PC-9 (cell line): ENCODE measurements at regions of chr1 and their contacts with region 1.

Region 1: DNA sequence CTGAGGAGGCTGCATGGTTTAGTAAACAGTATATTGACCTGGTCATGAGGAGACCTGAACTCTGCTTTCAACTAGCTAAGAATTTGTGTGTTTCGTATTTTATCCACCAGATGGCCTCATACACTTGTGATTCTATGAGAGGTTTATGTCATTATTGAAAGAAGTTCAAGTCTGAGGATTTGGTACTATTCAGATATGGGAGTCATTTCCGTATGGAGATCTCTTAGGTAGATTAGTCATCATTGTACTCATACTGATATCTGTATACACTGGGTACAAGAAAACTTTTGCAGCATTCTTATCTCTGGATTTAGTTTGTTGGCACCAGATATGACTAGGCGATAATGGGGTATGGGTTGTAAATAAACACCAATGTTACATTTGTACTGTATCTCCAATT is 26.6 kb downstream of the ATF6 start:
- DNase-seq: peak; percentile 5 to 84
- H3K4me3 ChIP-seq: no peak overlapping the region
- H3K27ac ChIP-seq: no peak overlapping the region
- H3K4me1 ChIP-seq: no peaks in the 10 kb centered on the region; the same call in 1 of the 2 replicates
- H3K27me3 ChIP-seq: no peaks in the 10 kb centered on the region
- CTCF ChIP-seq: peak; percentile 76

Region 2: GRCh38 chr1:162023547-162024501 is 231.1 kb after region 1 on chr1 and contains the start of gene OLFML2B:
- CTCF ChIA-PET with region 1: interaction called, 6 read pairs
- POLR2A ChIA-PET with region 1: interaction called, 3 read pairs
- intact Hi-C with region 1: loop called (anchors 5 kb)
- DNase-seq: peak; percentile 61 to 65
- H3K4me3 ChIP-seq: peak within 1 kb of the TSS; percentile 67
- H3K27ac ChIP-seq: no peak within 1 kb of the TSS
- H3K4me1 ChIP-seq: peaks cover 6% of the 10 kb centered on the region
- H3K27me3 ChIP-seq: peaks cover 10% of the 10 kb centered on the region; the same call in 1 of the 2 replicates
- CTCF ChIP-seq: peak; percentile 44; the same call in 1 of the 2 replicates
- total RNA-seq, gene OLFML2B: 0.50 TPM in 1 of 2 replicates, not detected in the other

Region 3: DNA sequence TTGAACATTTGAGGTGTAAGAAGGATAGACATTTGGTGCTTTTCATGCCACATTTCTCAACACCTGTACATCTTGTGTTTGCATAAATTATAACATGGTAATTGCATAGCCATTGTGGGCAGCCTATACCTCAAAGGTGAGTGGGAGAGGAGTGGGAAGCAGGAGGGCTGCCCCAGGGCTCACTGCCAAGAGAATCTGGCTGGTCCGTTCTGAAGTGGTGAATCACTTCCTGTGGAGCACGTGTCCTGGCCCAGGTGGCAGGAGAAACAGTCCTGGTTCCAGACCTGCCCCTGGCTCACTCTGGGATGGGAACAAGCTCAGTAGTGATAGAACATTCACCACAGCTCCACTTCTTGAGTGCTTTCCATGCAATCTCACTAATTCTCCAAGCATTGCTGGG is 242.5 kb after region 1 on chr1:
- CTCF ChIA-PET with region 1: interaction called, 99 read pairs
- POLR2A ChIA-PET with region 1: interaction called, 4 read pairs
- intact Hi-C with region 1: loop called (anchors 1 kb)
- DNase-seq: peak in 1 of 2 experiments; percentile 27
- H3K4me3 ChIP-seq: no peak overlapping the region
- H3K27ac ChIP-seq: no peak overlapping the region
- H3K4me1 ChIP-seq: 0 out of 2 replicates have a peak, but pooled peaks cover 6% of the 10 kb centered on the region
- H3K27me3 ChIP-seq: no peaks in the 10 kb centered on the region
- CTCF ChIP-seq: no peak

Region 4: GRCh38 chr1:162040681-162041080 is 247.9 kb after region 1 on chr1:
- CTCF ChIA-PET with region 1: interaction called, 99 read pairs
- POLR2A ChIA-PET with region 1: interaction called, 4 read pairs
- intact Hi-C with region 1: loop called (anchors 1 kb)
- DNase-seq: peak in 1 of 2 experiments; percentile 39
- H3K4me3 ChIP-seq: no peak overlapping the region
- H3K27ac ChIP-seq: no peak overlapping the region
- H3K4me1 ChIP-seq: 0 out of 2 replicates have a peak, but pooled peaks cover 1% of the 10 kb centered on the region
- H3K27me3 ChIP-seq: no peaks in the 10 kb centered on the region
- CTCF ChIP-seq: peak; percentile 58; the same call in 1 of the 2 replicates

Region 5: GRCh38 chr1:162276493-162276892 is 483.8 kb after region 1 on chr1:
- CTCF ChIA-PET with region 1: no interaction called
- POLR2A ChIA-PET with region 1: no interaction called
- intact Hi-C with region 1: loop called (anchors 5 kb)
- DNase-seq: no peak
- H3K4me3 ChIP-seq: no peak overlapping the region
- H3K27ac ChIP-seq: no peak overlapping the region
- H3K4me1 ChIP-seq: no peaks in the 10 kb centered on the region
- H3K27me3 ChIP-seq: no peaks in the 10 kb centered on the region
- CTCF ChIP-seq: peak; percentile 71

Region 6: DNA sequence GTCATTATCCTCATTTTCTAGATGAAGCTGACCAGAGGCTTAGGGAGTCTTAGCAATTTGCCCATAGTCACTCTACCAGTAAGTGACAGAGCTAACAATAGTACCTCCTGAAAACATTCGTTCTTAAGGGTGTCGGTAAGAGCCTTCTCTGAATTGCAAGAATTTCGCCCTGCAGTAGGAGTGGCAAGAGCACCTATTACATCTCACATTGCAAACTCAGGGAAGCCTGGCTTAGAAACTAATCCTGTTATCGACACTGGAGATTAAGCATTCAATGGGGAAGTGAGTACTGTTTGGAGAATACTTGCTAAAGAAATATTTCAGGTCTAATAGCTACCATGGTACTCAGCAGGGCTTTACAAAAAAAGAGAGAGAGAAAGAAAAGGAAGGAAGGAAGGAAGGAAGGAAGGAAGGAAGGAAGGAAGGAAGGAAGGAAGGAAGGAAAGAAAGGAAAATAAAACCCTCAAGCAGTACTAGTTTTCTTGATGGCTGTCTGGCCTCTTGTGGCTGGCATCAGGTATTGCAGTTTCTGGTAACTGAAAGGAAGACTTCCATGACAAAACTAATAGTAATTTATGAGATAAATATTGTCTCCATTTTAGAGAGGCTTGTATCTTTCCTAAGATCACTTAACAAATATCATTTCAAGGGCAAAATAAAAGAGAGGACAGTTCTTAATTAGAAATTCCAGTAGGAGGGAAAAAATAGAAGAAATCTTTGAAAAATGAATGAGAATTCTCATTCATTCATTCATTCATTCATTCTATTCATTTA is 599.2 kb after region 1 on chr1:
- CTCF ChIA-PET with region 1: no interaction called
- POLR2A ChIA-PET with region 1: no interaction called
- intact Hi-C with region 1: loop called (anchors 5 kb)
- DNase-seq: peak in 1 of 2 experiments; percentile 21
- H3K4me3 ChIP-seq: no peak overlapping the region
- H3K27ac ChIP-seq: no peak overlapping the region
- H3K4me1 ChIP-seq: no peaks in the 10 kb centered on the region
- H3K27me3 ChIP-seq: no peaks in the 10 kb centered on the region
- CTCF ChIP-seq: peak; percentile 95